ENCODE measurements at regions of chr11 and their contacts with region 1.

Region 1: GRCh38 chr11:118353084-118353710 is 6.2 kb upstream of the UBE4A start:
- DNase-seq: no peak
- ATAC-seq: no peak

Region 2: GRCh38 chr11:118314988-118315411 is 38.2 kb before region 1 on chr11:
- intact Hi-C with region 1: loop called (anchors 5 kb)
- DNase-seq: no peak
- ATAC-seq: no peak

Region 3: GRCh38 chr11:118679483-118679882 is 326.3 kb after region 1 on chr11 and contains the start of gene TREH:
- intact Hi-C with region 1: no loop called
- DNase-seq: peak; percentile 43
- ATAC-seq: peak; percentile 42
- total RNA-seq, gene TREH: not detected

Region 4: DNA sequence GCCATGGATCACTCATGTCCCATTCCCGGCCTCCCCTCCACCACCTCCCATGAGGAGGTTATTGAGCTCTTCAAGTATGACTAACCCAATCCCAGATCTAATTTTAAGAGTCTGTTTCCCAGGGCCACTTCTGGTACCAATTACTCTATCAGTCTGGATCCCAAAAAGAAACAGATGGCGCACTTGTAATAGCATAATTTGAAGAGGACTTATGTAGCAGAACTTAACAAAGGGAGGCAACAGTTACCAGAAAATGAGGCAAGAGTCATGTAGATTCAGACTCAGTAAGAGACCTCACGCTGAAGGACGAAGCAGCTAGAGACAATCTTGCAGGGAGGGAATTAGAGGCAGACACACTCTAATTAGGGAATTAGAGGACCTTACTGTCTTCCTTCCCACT is 390.8 kb after region 1 on chr11:
- intact Hi-C with region 1: no loop called
- DNase-seq: no peak
- ATAC-seq: no peak

Region 5: GRCh38 chr11:119935349-119935925 is 1582.2 kb after region 1 on chr11:
- intact Hi-C with region 1: no loop called
- DNase-seq: no peak
- ATAC-seq: no peak

Measured in sciatic nerve (tissue), 2 donors.